ENCODE measurements at regions of chr13 and their contacts with region 1.

Region 1: DNA sequence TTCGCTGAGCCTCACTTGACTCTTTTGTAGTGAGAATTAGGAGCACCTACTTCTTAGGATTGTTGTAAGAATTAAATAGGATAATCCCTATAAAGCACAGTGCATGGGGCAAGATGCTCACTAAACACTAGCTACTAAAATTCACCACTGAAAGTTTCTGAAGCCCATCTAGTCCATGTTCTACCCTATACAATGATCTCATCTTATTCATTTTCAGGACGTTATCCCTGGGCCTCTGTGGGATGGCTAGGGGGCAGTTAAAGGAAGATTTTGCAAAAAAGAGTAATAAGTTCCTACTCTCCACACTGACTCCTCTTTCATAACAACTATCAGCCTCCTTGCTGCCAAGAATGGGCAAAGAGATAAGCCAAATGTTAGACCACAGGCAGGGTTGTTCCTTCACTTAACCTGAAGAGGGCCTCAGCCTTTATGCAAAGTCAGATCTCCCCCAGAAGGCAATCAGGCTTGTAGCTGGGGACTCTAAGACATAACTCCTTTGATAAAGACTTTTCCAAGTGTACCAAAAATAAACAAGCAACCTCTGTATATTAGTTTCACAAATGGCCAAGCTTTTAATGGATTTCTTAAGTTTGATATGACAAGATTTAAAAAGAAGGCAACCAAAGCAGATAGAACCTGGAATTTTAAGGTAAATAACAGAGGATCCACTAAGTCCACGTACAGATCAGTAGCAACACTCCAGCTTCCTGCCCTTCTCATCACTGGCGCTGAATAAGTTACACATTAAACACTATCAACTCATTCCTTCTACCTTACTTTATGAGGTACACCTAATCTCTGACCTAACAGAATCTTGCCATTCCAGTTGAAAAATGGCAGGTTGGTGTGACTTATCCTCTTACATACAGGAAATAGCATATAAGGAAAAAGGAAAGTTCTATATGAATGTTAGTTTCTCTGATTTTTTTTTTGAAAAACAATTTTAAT is 44.4 kb downstream of the ELF1 start:
- DNase-seq: peak in 8 of 14 experiments; percentile 17 to 81 (median 32)
- ATAC-seq: peak; percentile 85
- H3K4me3 ChIP-seq: no peak overlapping the region
- H3K4me3 Mint-ChIP-seq: peak overlapping the region; percentile 77
- H3K27ac ChIP-seq: peak overlapping the region in 1 of 2 donors; percentile 46
- H3K27ac Mint-ChIP-seq: peak overlapping the region; percentile 92
- H3K4me1 ChIP-seq: peaks cover 37% of the 10 kb centered on the region
- H3K4me1 Mint-ChIP-seq: peaks cover 94% of the 10 kb centered on the region
- H3K27me3 ChIP-seq: no peaks in the 10 kb centered on the region
- H3K27me3 Mint-ChIP-seq: no peaks in the 10 kb centered on the region
- CTCF ChIP-seq: peak; percentile 70

Region 2: DNA sequence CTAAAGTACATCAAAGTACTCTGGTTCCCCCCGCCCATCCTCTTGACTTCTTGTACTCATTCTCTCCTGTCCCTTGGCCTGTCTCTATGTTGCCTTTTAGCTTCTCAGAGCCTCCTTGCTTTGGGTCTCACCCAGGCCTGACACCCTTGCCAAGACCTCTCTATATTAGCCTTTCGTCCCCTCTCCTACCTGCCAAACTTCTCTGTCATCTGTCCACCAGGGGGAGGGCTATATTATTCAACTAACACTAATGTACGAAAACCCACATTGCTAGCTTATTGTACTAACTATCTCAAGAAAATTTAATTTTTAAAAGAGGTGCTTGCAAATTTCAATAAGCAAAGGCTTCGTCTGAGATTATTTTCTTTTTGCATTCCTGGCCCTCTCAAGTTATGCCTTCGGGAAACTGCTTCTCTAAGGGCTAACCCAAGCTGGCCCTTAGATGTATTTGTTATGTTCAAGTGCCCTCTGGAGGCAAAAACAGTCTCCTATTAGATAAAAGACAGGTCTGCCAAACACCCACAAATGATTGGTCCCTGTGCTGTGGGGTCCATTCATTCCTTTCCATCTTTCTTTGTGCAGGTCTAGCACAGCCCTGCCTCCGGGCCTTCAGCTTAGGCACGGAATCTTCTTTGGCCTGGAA is 197.4 kb before region 1 on chr13:
- CTCF ChIA-PET with region 1: no interaction called
- POLR2A ChIA-PET with region 1: no interaction called
- intact Hi-C with region 1: no loop called
- DNase-seq: peak in 7 of 14 experiments; percentile 15 to 76 (median 45)
- ATAC-seq: peak; percentile 50
- H3K4me3 ChIP-seq: peak overlapping the region; percentile 24
- H3K4me3 Mint-ChIP-seq: peak overlapping the region; percentile 83
- H3K27ac ChIP-seq: peak overlapping the region; percentile 71 to 73
- H3K27ac Mint-ChIP-seq: peak overlapping the region; percentile 91
- H3K4me1 ChIP-seq: peaks cover 30% of the 10 kb centered on the region
- H3K4me1 Mint-ChIP-seq: peaks cover 33% of the 10 kb centered on the region
- H3K27me3 ChIP-seq: no peaks in the 10 kb centered on the region
- H3K27me3 Mint-ChIP-seq: no peaks in the 10 kb centered on the region
- CTCF ChIP-seq: peak; percentile 84

Region 3: DNA sequence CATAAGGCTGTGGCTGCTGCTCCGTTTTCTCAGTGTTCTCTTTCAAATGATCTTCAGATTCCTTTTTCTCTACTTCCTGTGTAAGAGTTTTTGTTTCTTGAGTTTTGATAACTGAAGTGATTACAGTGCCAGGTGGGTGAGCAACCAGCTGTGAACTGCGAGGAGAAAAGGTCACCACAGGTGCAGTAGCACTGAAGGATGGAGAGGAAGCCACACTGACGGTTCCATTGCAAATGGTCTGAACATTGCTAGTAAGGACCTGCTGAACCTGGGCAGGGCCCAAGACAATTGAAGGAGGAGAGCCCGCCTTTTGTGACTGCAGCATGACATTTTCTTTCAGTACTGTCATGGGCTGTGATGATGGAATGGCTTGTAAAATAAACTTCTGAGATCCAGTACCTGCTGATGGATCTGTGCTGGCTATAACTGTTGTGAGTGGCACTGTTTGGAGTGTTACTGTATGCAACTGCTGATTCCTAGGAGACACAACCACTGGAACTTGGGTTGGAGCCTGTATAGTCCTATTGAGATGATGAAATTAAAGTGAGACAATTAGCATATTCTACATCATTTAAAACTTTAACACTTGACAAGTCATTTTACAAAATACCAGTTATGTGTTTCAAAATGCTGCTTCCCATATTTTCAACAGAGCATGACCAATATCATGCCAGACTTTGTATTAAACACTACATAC is 41.1 kb before region 1 on chr13:
- CTCF ChIA-PET with region 1: interaction called, 7 read pairs
- POLR2A ChIA-PET with region 1: interaction called, 4 read pairs
- intact Hi-C with region 1: loop called in 1 of 2 experiments (anchors 5 kb)
- DNase-seq: peak in 1 of 14 experiments; percentile 17
- ATAC-seq: no peak
- H3K4me3 ChIP-seq: no peak overlapping the region
- H3K4me3 Mint-ChIP-seq: peak overlapping the region; percentile 42
- H3K27ac ChIP-seq: no peak overlapping the region
- H3K27ac Mint-ChIP-seq: peak overlapping the region; percentile 57
- H3K4me1 ChIP-seq: peaks cover 6% of the 10 kb centered on the region
- H3K4me1 Mint-ChIP-seq: peaks cover 44% of the 10 kb centered on the region
- H3K27me3 ChIP-seq: no peaks in the 10 kb centered on the region
- H3K27me3 Mint-ChIP-seq: no peaks in the 10 kb centered on the region
- CTCF ChIP-seq: no peak

Region 4: DNA sequence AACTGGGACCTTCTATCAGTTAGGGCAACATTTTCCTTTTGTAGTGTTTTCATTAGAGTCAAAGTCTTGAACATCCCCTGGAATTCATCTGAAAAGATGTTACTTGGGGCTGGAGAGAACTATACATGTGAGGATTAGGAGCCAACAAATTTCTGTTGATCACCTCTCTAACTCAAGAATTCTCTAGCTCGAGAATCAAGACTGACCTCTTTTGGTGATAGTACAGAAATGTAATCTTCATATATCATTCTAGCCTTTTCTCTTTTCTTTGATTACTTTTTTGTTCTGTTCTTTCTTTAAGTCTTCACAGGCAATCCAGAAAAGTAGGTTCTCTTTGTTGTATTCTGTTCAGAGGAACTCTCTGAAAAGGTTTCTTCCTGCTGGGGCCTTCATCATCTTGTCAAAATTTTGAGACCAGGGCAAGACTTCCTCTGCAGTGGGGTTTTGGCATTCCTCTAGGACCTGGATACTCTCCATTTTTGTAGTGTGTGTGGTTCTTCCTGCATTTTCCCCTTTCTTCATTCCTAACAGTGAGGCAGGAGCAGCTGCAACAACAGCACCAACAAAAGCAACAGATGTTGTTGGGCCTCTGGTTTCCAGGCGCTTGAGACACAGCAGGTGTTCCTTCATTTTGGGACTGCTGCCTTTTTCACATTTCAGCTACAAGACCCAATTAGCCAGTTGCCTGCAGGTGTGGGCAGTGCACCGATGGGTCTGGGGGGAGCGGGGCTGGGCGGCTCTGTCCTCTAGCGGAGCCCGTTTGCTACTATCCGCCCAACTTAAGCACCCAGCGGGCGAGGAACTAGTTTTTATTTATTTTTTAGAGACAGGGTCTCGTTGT is 18.2 kb after region 1 on chr13:
- CTCF ChIA-PET with region 1: interaction called, 43 read pairs
- POLR2A ChIA-PET with region 1: interaction called, 7 read pairs
- intact Hi-C with region 1: loop called (anchors 2 kb)
- DNase-seq: peak in 3 of 14 experiments; percentile 40 to 63 (median 62)
- ATAC-seq: peak; percentile 52
- H3K4me3 ChIP-seq: no peak overlapping the region
- H3K4me3 Mint-ChIP-seq: peak overlapping the region; percentile 16
- H3K27ac ChIP-seq: peak overlapping the region; percentile 49 to 55
- H3K27ac Mint-ChIP-seq: peak overlapping the region; percentile 84
- H3K4me1 ChIP-seq: peaks cover 50% of the 10 kb centered on the region
- H3K4me1 Mint-ChIP-seq: peaks cover 92% of the 10 kb centered on the region
- H3K27me3 ChIP-seq: no peaks in the 10 kb centered on the region
- H3K27me3 Mint-ChIP-seq: no peaks in the 10 kb centered on the region
- CTCF ChIP-seq: peak; percentile 40

Region 5: DNA sequence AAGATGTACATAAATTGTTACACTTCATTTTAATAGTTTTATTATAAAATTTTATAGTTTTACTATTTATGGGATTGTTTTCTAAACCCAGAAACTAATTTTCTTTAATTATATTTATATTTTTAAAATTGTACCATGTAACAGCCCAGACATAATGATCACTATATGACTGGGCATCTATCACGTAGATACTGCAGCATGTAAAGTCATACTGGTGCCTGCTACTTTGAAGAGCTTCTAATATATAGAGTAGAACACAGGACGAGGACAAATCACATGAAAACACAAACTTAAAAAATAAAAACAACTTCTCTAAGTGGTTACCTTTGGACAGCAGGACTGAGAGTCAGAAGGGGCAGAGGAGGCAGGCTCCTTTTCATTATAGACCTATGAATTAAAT is 39.1 kb after region 1 on chr13:
- CTCF ChIA-PET with region 1: interaction called, 29 read pairs
- POLR2A ChIA-PET with region 1: interaction called, 152 read pairs
- intact Hi-C with region 1: loop called (anchors 5 to 10 kb)
- DNase-seq: no peak
- ATAC-seq: no peak
- H3K4me3 ChIP-seq: peak overlapping the region; percentile 52
- H3K4me3 Mint-ChIP-seq: peak overlapping the region; percentile 92
- H3K27ac ChIP-seq: peak overlapping the region in 1 of 2 donors; percentile 10
- H3K27ac Mint-ChIP-seq: peak overlapping the region; percentile 94
- H3K4me1 ChIP-seq: peaks cover 21% of the 10 kb centered on the region
- H3K4me1 Mint-ChIP-seq: peaks cover 69% of the 10 kb centered on the region
- H3K27me3 ChIP-seq: no peaks in the 10 kb centered on the region
- H3K27me3 Mint-ChIP-seq: no peaks in the 10 kb centered on the region
- CTCF ChIP-seq: no peak